Activated B cell treated with CpG ODN at 0.5 μM for 24 hours (primary cell): ENCODE measurements at regions of chr18 and their contacts with region 1.

Region 1: GRCh38 chr18:70205421-70206397 is at the start of gene RTTN:
- DNase-seq: peak; percentile 91
- ATAC-seq: peak; percentile 94
- H3K4me3 Mint-ChIP-seq: peak within 1 kb of the TSS; percentile 97
- H3K27ac Mint-ChIP-seq: peak within 1 kb of the TSS; percentile 99
- H3K4me1 Mint-ChIP-seq: peaks cover 25% of the 10 kb centered on the region
- H3K27me3 Mint-ChIP-seq: no peaks in the 10 kb centered on the region
- CTCF ChIP-seq: no peak
- total RNA-seq, gene RTTN: 25.0 and 25.9 TPM in 2 replicates

Region 2: DNA sequence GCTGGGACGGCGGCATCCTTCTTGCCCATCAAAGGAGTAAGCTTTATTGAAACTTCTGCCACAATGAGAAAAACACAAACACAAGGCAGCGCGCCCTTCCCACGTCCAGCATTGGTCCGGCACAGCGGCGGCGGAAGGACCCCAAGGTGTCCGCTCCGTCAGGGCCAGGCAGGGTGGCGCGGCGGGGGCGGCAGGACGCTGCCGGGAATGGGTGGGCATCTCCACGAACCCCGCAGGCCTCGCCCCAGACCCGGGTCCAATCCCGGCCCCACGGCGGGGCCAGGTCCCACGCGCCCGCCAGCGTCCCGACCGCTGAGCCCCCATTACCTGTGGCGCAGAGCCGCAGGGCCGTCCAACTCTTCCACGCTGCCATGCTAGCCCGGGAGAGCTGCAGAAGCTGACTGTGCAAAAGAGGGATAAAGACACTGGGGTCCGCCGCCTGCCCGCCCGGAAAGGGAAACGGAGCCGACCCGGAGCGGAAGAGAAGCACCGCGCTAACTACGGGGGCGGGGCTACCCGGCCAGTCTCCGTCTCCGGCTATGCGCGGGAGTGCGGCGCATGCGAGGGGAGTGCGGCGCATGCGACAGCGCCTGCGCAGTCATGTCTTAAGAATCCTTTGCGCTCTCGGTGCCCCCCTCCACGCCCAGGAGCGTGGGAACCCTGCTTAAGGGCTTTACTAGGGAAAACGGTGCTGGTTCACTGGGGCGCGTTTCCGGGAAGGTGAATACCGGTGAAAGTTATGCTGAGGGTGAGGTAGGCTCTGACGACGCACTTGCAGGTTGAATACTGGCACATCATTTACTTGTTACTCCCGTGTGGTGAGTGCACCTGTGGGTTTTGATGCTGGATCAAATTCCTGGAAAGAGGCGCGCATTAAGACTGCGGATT is 1490.9 kb before region 1 on chr18 and contains the start of gene TMX3:
- CTCF ChIA-PET with region 1: no interaction called
- POLR2A ChIA-PET with region 1: no interaction called
- intact Hi-C with region 1: loop called (anchors 1 kb)
- DNase-seq: peak; percentile 88
- ATAC-seq: peak; percentile 99
- H3K4me3 Mint-ChIP-seq: peak within 1 kb of the TSS; percentile 95
- H3K27ac Mint-ChIP-seq: peak within 1 kb of the TSS; percentile 82
- H3K4me1 Mint-ChIP-seq: peaks cover 35% of the 10 kb centered on the region
- H3K27me3 Mint-ChIP-seq: no peaks in the 10 kb centered on the region
- CTCF ChIP-seq: no peak
- total RNA-seq, gene TMX3: 47.0 and 59.9 TPM in 2 replicates

Region 3: DNA sequence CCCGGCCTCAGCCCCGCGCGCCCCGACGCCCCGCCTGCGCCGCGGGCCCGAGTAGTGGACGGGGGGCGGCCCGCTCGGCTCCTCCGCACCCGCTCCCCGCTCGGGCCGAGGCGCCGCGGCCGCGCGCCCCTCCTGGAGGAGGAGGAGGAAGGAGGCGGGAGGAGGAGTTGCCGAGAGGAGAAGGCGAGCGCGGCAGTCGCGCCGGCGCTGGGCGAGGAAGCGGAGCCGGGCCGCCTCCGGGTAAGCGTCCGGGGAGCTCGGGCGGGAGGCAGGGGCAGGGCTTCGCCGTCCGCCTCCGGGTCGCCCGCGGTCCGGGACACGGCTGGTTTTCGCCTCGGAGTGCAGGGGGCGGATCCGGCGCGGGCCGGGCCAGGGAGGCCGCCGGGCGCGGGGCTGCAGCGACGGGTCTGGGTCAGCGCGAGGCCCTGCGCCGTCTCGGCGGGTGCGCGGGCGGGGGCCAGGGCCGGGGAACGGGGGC is 83.2 kb after region 1 on chr18 and contains the start of gene SOCS6:
- CTCF ChIA-PET with region 1: no interaction called
- POLR2A ChIA-PET with region 1: no interaction called
- intact Hi-C with region 1: loop called (anchors 1 kb)
- DNase-seq: peak; percentile 29
- ATAC-seq: peak; percentile 64
- H3K4me3 Mint-ChIP-seq: peak within 1 kb of the TSS; percentile 82
- H3K27ac Mint-ChIP-seq: no peak within 1 kb of the TSS
- H3K4me1 Mint-ChIP-seq: peaks cover 13% of the 10 kb centered on the region
- H3K27me3 Mint-ChIP-seq: peaks cover 24% of the 10 kb centered on the region
- CTCF ChIP-seq: no peak
- total RNA-seq, gene SOCS6: 1.1 and 1.6 TPM in 2 replicates